ENCODE measurements at regions of chr11 and their contacts with region 1.

Region 1: DNA sequence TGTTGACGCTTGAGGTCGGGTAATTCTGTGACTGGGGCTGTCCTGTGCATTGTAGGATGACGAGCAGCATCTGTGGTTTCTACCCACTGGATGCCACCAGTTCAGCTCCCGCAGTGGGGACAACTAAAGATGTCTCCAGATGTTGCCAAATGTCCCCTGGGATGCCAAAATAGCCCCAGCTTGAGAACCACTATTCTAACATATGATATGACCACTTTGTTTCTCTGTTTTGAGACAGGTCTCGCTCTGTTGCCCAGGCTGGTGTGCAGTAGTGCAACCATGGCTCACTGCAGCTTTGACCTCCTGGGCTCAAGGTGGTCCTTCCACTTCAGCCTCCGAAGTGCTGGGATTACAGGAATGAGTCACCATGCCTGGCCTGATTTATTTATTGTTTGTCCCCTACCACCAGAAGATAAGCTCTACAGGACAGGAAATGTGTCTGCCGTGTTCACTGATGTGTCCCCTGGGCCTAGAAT is 4.4 kb upstream of the MEN1 start:
- DNase-seq: peak; percentile 94
- ATAC-seq: peak; percentile 73
- H3K4me3 ChIP-seq: no peak overlapping the region
- H3K27ac ChIP-seq: no peak overlapping the region
- H3K4me1 ChIP-seq: peaks cover 18% of the 10 kb centered on the region
- H3K27me3 ChIP-seq: no peaks in the 10 kb centered on the region
- CTCF ChIP-seq: no peak
- EP300 ChIP-seq: peak; percentile 18 to 67; a peak in 2 of 4 replicates
- POLR2A ChIP-seq: no peak
- RAD21 ChIP-seq: no peak

Region 2: GRCh38 chr11:64742889-64743590 is 71.7 kb before region 1 on chr11:
- CTCF ChIA-PET with region 1: no interaction called
- POLR2A ChIA-PET with region 1: interaction called, 3 read pairs
- RAD21 ChIA-PET with region 1: interaction called, 4 read pairs
- SMC1A ChIA-PET with region 1: no interaction called
- in situ Hi-C with region 1: no loop called
- intact Hi-C with region 1: loop called (anchors 2 kb)
- DNase-seq: no peak
- ATAC-seq: peak; percentile 70
- H3K4me3 ChIP-seq: peak overlapping the region; percentile 35
- H3K27ac ChIP-seq: no peak overlapping the region
- H3K4me1 ChIP-seq: peaks cover 29% of the 10 kb centered on the region
- H3K27me3 ChIP-seq: peaks cover 0 to 5% of the 10 kb centered on the region in 2 experiments; a peak in 3 of 4 replicates
- CTCF ChIP-seq: peak; percentile 69 to 93 (median 81)
- EP300 ChIP-seq: no peak
- POLR2A ChIP-seq: no peak
- RAD21 ChIP-seq: peak; percentile 62